ENCODE measurements at regions of chr12 and their contacts with region 1.

Region 1: GRCh38 chr12:108371801-108372344 is 32.8 kb upstream of the CMKLR1 start:
- DNase-seq: peak; percentile 84

Region 2: GRCh38 chr12:107570721-107571120 is 801.2 kb before region 1 on chr12:
- intact Hi-C with region 1: loop called in 1 of 2 experiments (anchors 5 kb)
- DNase-seq: no peak

Region 3: DNA sequence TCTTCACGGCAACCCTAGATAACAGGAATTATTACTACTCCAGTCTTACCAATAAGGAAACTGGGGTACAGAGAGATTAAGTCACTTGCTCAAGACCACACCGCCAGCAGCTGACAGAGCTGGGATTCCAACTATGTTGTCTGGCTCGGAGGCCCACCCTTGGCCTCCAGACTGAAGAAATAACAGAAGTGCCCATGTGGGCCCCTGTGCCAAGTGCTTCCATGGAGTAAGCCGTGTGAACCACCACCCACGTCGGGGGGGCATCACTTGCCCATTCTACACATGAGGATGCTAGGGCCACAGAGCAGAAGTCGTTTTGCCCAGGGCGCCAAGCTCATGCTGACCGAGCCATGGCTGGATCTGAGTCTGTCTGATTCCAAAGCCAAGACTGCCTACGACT is 31.8 kb before region 1 on chr12:
- intact Hi-C with region 1: loop called in 1 of 2 experiments (anchors 2 kb)
- DNase-seq: peak; percentile 85